Activated CD4-positive, alpha-beta memory T cell treated with anti-CD3 and anti-CD28 coated beads for 36 hours (primary cell): ENCODE measurements at regions of chr6 and their contacts with region 1.

Region 1: DNA sequence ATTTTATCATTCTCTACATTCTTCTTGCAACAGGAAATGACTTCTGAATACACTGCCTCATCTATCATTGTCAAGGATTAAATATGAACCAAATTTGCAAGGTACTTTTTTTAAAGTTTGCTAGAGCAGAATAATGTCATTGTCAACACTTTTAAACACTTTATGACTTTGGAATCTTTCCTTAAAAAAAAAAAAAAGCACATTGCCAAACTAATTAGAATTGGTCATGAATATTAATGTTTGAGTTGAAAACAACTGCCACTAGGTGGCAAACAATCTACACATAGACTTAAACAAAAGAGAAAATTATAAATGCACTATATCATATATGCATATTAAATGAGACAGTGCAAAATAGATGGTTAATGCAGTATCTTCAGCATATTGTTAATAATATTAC is 32.5 kb upstream of the TMEM244 start:
- DNase-seq: no peak
- H3K4me3 Mint-ChIP-seq: no peak overlapping the region
- H3K27ac Mint-ChIP-seq: no peak overlapping the region
- H3K4me1 Mint-ChIP-seq: peaks cover 5% of the 10 kb centered on the region
- H3K27me3 Mint-ChIP-seq: no peaks in the 10 kb centered on the region

Region 2: GRCh38 chr6:129936329-129937165 is 42.9 kb after region 1 on chr6:
- CTCF ChIA-PET with region 1: interaction called, 3 read pairs
- POLR2A ChIA-PET with region 1: no interaction called
- intact Hi-C with region 1: loop called (anchors 1 kb)
- DNase-seq: peak; percentile 44
- H3K4me3 Mint-ChIP-seq: no peak overlapping the region
- H3K27ac Mint-ChIP-seq: no peak overlapping the region
- H3K4me1 Mint-ChIP-seq: no peaks in the 10 kb centered on the region
- H3K27me3 Mint-ChIP-seq: peaks cover 12% of the 10 kb centered on the region